ENCODE measurements at regions of chr7 and their contacts with region 1.

Region 1: DNA sequence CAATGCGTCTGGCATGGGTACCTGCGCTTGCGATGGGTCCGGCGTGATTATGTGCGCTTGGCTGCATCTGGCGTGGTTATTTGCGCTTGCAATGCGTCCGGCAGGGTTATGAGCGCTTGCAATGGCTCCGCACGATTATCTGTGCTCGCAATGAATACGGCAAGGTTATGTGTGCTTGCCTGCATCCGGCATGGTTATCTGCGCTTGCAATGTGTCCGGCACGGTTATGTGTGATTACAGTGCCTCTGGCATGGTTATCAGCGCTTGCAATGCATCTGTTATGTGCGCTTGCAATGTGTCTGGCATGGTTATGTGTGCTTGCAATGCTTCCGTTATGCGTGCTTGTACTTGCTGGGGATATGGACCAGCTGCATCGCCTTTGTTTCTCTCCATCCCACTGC is 37.7 kb downstream of the RBAK start:
- DNase-seq: no peak
- ATAC-seq: no peak
- H3K4me3 ChIP-seq: no peak overlapping the region
- H3K4me1 ChIP-seq: no peaks in the 10 kb centered on the region
- CTCF ChIP-seq: no peak

Region 2: DNA sequence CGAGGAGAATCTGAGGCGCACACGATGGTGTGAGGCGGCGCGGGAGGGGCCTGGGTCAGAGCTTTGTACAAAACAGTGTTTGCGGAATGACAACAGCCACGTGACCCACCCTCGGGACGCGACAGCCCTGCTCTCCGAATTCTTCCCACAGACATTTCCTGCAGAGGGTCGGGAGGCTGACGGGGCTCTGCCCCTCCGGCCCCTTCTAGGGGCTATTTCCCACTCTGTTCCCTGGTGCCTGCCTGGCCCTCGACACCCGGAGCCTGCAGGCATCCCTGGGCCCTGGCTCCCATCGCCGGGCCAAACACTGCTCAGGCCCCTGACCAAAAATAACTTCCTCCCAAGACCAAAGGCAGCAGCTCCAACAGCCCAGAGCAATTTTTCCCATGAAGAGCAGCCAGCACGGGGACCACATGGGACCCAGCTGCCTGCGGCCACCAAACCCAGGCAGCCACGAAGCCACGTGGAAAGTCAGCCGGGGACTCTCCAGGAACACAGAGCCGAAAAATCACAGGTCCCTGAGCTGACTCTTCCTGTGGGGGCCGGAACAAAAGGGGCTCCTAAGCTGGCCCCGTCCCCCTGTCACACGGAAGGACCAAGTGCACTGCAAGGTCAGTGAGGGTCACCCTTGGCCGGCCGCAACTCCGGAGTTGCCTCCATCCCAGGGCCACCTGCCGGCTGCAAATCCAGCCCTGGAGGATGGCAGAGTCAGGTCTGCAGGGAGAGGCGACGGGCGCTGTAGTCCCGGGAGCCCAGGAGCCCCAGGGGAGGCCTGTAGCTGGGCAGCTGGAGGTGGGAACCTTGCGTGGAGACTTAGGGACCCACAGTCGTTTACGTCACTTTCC is 263.5 kb before region 1 on chr7:
- intact Hi-C with region 1: loop called in 1 of 2 experiments (anchors 10 kb)
- DNase-seq: peak in 1 of 3 donors; percentile 37
- ATAC-seq: no peak
- H3K4me3 ChIP-seq: no peak overlapping the region
- H3K4me1 ChIP-seq: no peaks in the 10 kb centered on the region
- CTCF ChIP-seq: no peak

Measured in mucosa of descending colon (tissue), 3 donors.